PC-9 (cell line): ENCODE measurements at regions of chr19 and their contacts with region 1.

Region 1: GRCh38 chr19:57191141-57192076 is at the start of gene ZNF264:
- DNase-seq: peak; percentile 75 to 88
- H3K4me3 ChIP-seq: peak within 1 kb of the TSS; percentile 82
- H3K27ac ChIP-seq: peak within 1 kb of the TSS; percentile 41
- H3K4me1 ChIP-seq: peaks cover 15% of the 10 kb centered on the region
- H3K27me3 ChIP-seq: peaks cover 6% of the 10 kb centered on the region; the same call in 1 of the 2 replicates
- CTCF ChIP-seq: no peak; the same call in 1 of the 2 replicates
- total RNA-seq, gene ZNF264: 30.6 and 51.6 TPM in 2 replicates

Region 2: DNA sequence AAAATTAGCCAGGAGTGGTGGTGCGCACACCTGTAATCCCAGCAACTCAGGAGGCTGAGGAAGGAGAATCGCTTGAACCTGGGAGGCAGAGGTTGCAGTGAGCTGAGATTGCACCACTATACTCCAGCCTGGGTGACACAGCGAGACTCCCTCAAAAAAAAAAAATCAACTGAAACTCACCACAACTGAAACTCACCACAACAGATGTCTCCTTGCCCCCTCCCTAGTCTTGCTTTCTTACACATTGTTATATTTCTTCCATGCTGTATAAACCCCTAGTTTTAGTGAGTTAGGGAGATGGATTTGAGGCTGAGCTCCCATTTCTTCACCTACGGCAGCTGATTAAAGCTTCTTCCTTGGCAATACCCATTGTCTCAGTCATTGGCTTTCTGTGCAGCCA is 49.7 kb before region 1 on chr19:
- CTCF ChIA-PET with region 1: no interaction called
- POLR2A ChIA-PET with region 1: interaction called, 19 read pairs
- intact Hi-C with region 1: no loop called
- DNase-seq: no peak
- H3K4me3 ChIP-seq: no peak overlapping the region
- H3K27ac ChIP-seq: no peak overlapping the region
- H3K4me1 ChIP-seq: no peaks in the 10 kb centered on the region
- H3K27me3 ChIP-seq: peaks cover 60% of the 10 kb centered on the region
- CTCF ChIP-seq: no peak

Region 3: DNA sequence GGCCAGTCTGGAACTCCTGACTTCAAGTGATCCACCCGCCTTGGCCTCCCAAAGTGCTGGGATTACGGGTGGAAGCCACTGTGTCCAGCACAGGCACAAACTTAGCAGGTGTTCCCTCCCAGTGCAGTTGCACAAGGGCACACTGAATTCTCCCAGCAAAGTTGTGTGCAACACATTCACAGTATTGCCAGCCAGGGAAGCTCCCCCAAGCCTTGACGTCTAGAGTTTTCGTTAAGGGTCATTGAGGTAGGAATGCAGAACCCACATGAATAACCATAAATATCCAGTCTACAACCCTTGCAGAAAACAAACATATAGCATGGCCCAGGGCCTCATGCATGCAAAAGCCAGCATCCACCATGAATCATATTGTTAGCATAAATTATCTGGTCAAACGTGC is 36.1 kb after region 1 on chr19:
- CTCF ChIA-PET with region 1: no interaction called
- POLR2A ChIA-PET with region 1: interaction called, 4 read pairs
- intact Hi-C with region 1: loop called (anchors 1 kb)
- DNase-seq: no peak
- H3K4me3 ChIP-seq: no peak overlapping the region
- H3K27ac ChIP-seq: no peak overlapping the region
- H3K4me1 ChIP-seq: no peaks in the 10 kb centered on the region
- H3K27me3 ChIP-seq: no peaks in the 10 kb centered on the region
- CTCF ChIP-seq: no peak

Region 4: DNA sequence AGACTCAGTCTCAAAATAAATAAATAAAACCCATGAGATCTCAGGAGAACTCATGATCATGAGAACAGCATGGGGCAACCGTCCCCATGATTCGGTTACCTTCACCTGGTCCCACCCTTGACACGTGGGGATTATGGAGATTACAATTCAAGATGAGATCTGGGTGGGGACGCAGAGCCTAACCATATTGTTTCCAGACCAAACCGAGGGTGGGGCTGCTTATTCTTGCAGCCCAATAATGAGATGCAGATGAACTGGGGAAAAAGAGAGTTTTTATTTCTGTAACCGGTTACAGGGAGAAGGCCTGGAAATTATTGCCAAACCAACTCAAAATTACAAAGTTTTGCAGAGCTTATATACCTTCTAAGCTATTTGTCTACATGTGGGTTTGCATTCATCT is 184.7 kb after region 1 on chr19:
- CTCF ChIA-PET with region 1: no interaction called
- POLR2A ChIA-PET with region 1: no interaction called
- intact Hi-C with region 1: no loop called
- DNase-seq: no peak
- H3K4me3 ChIP-seq: no peak overlapping the region
- H3K27ac ChIP-seq: no peak overlapping the region
- H3K4me1 ChIP-seq: no peaks in the 10 kb centered on the region
- H3K27me3 ChIP-seq: no peaks in the 10 kb centered on the region
- CTCF ChIP-seq: no peak

Region 5: GRCh38 chr19:57682226-57682766 is 490.9 kb after region 1 on chr19:
- CTCF ChIA-PET with region 1: no interaction called
- POLR2A ChIA-PET with region 1: no interaction called
- intact Hi-C with region 1: no loop called
- DNase-seq: no peak
- H3K4me3 ChIP-seq: peak overlapping the region; percentile 85
- H3K27ac ChIP-seq: no peak overlapping the region
- H3K4me1 ChIP-seq: 0 out of 2 replicates have a peak, but pooled peaks cover 7% of the 10 kb centered on the region
- H3K27me3 ChIP-seq: no peaks in the 10 kb centered on the region
- CTCF ChIP-seq: no peak